Heart right ventricle (tissue), 16 donors: ENCODE measurements at regions of chr16 and their contacts with region 1.

Region 1: DNA sequence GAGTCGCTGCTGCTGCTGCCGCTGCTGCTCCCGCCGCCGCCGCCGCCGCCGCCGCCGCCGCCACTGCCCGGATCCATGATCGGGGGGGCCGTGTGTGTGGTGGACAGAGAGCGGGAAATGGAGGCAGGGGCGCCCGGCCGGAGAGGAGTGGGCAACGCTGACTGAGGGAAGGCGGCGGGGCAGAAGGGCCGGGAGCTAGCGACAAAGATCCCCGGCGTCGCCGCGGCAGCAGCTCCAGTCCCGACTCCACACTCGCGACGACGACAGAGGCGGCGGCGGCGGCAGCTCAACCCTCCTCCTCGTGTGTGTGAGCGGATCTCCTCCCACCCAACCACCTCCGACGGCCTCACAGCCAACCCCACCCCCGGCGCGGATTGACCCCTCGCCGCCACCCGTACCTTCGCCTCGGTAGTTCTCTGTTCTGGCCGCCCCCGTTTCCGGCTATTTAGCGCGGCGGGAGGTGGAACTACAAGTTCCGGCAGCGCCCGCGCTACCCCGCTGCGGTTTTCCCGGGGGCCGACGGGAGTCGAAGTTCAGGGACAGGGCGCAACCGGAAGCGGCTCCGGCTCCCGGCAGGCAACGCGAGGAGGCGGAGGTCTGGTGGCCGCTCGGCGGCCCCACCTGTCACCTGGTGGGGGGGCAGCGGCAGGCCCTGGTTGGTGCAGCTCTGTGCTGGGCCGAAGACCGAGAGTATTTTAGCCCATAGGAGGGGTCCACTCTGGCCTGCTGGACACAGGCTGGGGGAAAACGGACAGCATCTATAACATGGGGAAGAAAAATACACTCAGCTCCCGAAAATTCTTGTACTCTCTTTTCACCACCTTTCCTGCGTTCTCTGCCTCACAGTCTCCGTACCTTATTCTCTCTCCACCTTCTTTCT is at the start of gene GSPT1:
- DNase-seq: peak; percentile 99 to 100
- ATAC-seq: peak; percentile 96 to 99 (median 98)
- H3K4me3 ChIP-seq: peak within 1 kb of the TSS; percentile 66 to 92 (median 83)
- H3K27ac ChIP-seq: peak within 1 kb of the TSS; percentile 55 to 99 (median 95)
- H3K4me1 ChIP-seq: peaks cover 4 to 41% (median 33%) of the 10 kb centered on the region in 9 donors
- H3K27me3 ChIP-seq: peaks cover 0 to 5% (median 0%) of the 10 kb centered on the region in 7 donors
- CTCF ChIP-seq: peak in 5 of 9 donors; percentile 17 to 35 (median 24)
- total RNA-seq, gene GSPT1: 85.5 to 117 (median 95.1) TPM

Region 2: GRCh38 chr16:11797166-11797956 is 118.5 kb before region 1 on chr16 and contains the start of gene ZC3H7A:
- intact Hi-C with region 1: loop called in 1 of 10 experiments (anchors 10 kb)
- DNase-seq: peak; percentile 96 to 97
- ATAC-seq: peak; percentile 98 to 99 (median 99)
- H3K4me3 ChIP-seq: peak within 1 kb of the TSS; percentile 78 to 100 (median 96)
- H3K27ac ChIP-seq: peak within 1 kb of the TSS; percentile 92 to 100 (median 98)
- H3K4me1 ChIP-seq: peaks cover 3 to 74% (median 64%) of the 10 kb centered on the region in 9 donors
- H3K27me3 ChIP-seq: no peaks in the 10 kb centered on the region
- CTCF ChIP-seq: peak; percentile 66 to 97 (median 83)
- total RNA-seq, gene ZC3H7A: 26.8 to 36.1 (median 30.6) TPM

Region 3: GRCh38 chr16:11819798-11820197 is 96.1 kb before region 1 on chr16:
- intact Hi-C with region 1: no loop called
- DNase-seq: no peak
- ATAC-seq: no peak
- H3K4me3 ChIP-seq: no peak overlapping the region
- H3K27ac ChIP-seq: no peak overlapping the region
- H3K4me1 ChIP-seq: peaks cover 0 to 23% (median 7%) of the 10 kb centered on the region in 9 donors
- H3K27me3 ChIP-seq: no peaks in the 10 kb centered on the region
- CTCF ChIP-seq: no peak

Region 4: DNA sequence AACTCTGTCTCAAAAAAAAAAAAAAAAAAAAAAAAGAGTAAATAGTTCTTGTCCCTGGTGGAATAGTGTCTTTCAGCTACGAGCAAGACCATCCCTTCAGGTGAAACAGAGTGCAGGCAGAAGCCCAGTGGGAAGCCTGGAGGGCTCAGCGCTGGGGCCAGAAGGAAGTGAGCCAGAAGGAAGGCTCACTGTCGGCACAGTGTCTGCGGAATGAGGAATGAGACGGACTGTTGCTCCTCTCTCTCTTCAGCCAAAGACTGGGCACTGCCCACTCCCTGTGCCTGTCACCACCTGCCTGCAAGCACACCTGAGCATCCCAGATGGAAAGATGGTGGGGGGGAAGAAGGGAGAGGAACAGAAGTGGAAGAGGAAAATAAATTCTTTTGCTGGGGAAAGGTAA is 72.0 kb before region 1 on chr16:
- intact Hi-C with region 1: no loop called
- DNase-seq: no peak
- ATAC-seq: no peak
- H3K4me3 ChIP-seq: no peak overlapping the region
- H3K27ac ChIP-seq: no peak overlapping the region
- H3K4me1 ChIP-seq: peaks cover 0 to 7% (median 0%) of the 10 kb centered on the region in 9 donors
- H3K27me3 ChIP-seq: no peaks in the 10 kb centered on the region
- CTCF ChIP-seq: no peak

Region 5: DNA sequence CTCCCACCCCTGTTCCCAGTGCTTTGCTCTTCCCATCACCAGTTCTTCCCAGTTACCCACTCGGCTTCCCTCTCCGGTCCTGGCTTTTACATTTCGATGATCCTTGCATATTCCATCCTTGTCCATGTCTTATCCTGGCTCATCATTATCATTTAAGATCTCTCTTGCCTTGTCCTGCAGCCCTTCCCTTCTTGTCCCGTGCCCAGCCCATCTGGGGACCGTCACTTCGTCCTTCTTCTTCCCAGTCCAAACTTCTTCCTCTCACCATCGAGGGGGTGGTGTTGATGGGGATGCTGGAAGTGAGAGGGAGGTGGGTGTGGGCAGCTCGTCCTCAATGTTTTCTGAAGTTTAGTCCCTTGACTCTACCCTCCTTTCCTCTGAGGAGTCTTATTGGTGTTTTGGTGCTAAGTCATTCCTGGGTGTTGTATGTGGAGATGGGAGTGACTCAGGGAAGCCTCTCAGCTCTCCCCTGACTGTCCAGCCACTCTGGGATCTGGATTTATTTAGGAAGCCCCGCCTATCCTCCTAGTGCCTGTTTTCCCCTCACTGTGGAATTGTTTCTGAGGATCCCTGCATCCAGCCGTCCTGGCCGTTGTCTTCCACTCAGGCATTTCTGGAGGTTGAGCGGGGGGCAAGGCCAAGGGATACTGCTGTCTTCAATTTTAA is 61.6 kb after region 1 on chr16:
- intact Hi-C with region 1: loop called in 1 of 10 experiments (anchors 5 kb)
- DNase-seq: peak in 1 of 2 donors; percentile 23
- ATAC-seq: peak in 7 of 8 donors; percentile 50 to 76 (median 62)
- H3K4me3 ChIP-seq: peak overlapping the region; percentile 77 to 100 (median 90)
- H3K27ac ChIP-seq: peak overlapping the region in 9 of 10 donors; percentile 83 to 94 (median 87)
- H3K4me1 ChIP-seq: peaks cover 6 to 26% (median 24%) of the 10 kb centered on the region in 9 donors
- H3K27me3 ChIP-seq: no peaks in the 10 kb centered on the region
- CTCF ChIP-seq: no peak

Region 6: DNA sequence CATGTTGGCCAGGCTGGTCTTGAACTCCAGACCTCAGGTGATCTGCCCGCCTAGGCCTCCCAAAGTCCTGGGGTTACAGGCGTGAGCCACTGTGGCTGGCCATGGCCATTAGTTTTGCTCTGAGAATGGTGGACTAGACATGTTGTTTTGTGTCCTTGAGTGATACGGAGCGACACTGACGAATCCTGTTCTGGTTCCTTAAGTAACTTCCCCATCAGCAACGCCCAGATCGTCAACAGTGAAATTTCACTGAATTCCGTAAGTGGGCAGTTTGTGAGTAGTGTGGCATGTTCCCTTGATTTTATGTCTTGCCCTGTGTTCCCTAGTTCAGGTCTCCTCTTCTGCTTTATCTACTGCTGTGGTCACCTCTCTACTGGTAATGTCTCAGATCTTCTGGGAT is 128.1 kb after region 1 on chr16:
- intact Hi-C with region 1: no loop called
- DNase-seq: no peak
- ATAC-seq: peak in 3 of 8 donors; percentile 34 to 42 (median 36)
- H3K4me3 ChIP-seq: no peak overlapping the region
- H3K27ac ChIP-seq: peak overlapping the region in 1 of 10 donors; percentile 71
- H3K4me1 ChIP-seq: peaks cover 0 to 7% (median 0%) of the 10 kb centered on the region in 9 donors
- H3K27me3 ChIP-seq: no peaks in the 10 kb centered on the region
- CTCF ChIP-seq: no peak

Region 7: GRCh38 chr16:12341423-12341822 is 425.5 kb after region 1 on chr16:
- intact Hi-C with region 1: no loop called
- DNase-seq: no peak
- ATAC-seq: peak in 6 of 8 donors; percentile 25 to 79 (median 58)
- H3K4me3 ChIP-seq: no peak overlapping the region
- H3K27ac ChIP-seq: no peak overlapping the region
- H3K4me1 ChIP-seq: peaks cover 0 to 18% (median 6%) of the 10 kb centered on the region in 9 donors
- H3K27me3 ChIP-seq: no peaks in the 10 kb centered on the region
- CTCF ChIP-seq: peak in 4 of 9 donors; percentile 27 to 40 (median 32)

Region 8: GRCh38 chr16:12803203-12804097 is 887.6 kb after region 1 on chr16 and contains the start of gene CPPED1:
- intact Hi-C with region 1: loop called in 1 of 10 experiments (anchors 5 kb)
- DNase-seq: peak; percentile 93 to 95
- ATAC-seq: peak; percentile 94 to 99 (median 98)
- H3K4me3 ChIP-seq: peak within 1 kb of the TSS; percentile 25 to 81 (median 68)
- H3K27ac ChIP-seq: peak within 1 kb of the TSS; percentile 18 to 93 (median 84)
- H3K4me1 ChIP-seq: peaks cover 0 to 46% (median 15%) of the 10 kb centered on the region in 9 donors
- H3K27me3 ChIP-seq: peaks cover 0 to 2% (median 0%) of the 10 kb centered on the region in 7 donors
- CTCF ChIP-seq: peak in 1 of 9 donors; percentile 10
- total RNA-seq, gene CPPED1: 11.3 to 20.2 (median 14.5) TPM